CD4-positive, alpha-beta T cell (primary cell): ENCODE measurements at regions of chr1 and their contacts with region 1.

Region 1: GRCh38 chr1:92980732-92981647 is 19.7 kb upstream of the DIPK1A start:
- DNase-seq: peak in 12 of 14 experiments; percentile 26 to 92 (median 45)
- ATAC-seq: peak; percentile 93
- H3K4me3 ChIP-seq: no peak overlapping the region
- H3K4me3 Mint-ChIP-seq: peak overlapping the region; percentile 67
- H3K27ac ChIP-seq: peak overlapping the region; percentile 85 to 89
- H3K27ac Mint-ChIP-seq: peak overlapping the region; percentile 97
- H3K4me1 ChIP-seq: peaks cover 41% of the 10 kb centered on the region
- H3K4me1 Mint-ChIP-seq: peaks cover 41% of the 10 kb centered on the region
- H3K27me3 ChIP-seq: no peaks in the 10 kb centered on the region
- H3K27me3 Mint-ChIP-seq: no peaks in the 10 kb centered on the region
- CTCF ChIP-seq: no peak

Region 2: GRCh38 chr1:92968138-92969032 is 12.6 kb before region 1 on chr1:
- CTCF ChIA-PET with region 1: interaction called, 15 read pairs
- POLR2A ChIA-PET with region 1: interaction called, 159 read pairs
- intact Hi-C with region 1: no loop called
- DNase-seq: peak in 4 of 14 experiments; percentile 35 to 75 (median 72)
- ATAC-seq: peak; percentile 47
- H3K4me3 ChIP-seq: no peak overlapping the region
- H3K4me3 Mint-ChIP-seq: no peak overlapping the region
- H3K27ac ChIP-seq: no peak overlapping the region
- H3K27ac Mint-ChIP-seq: peak overlapping the region; percentile 5
- H3K4me1 ChIP-seq: peaks cover 47% of the 10 kb centered on the region
- H3K4me1 Mint-ChIP-seq: peaks cover 30% of the 10 kb centered on the region
- H3K27me3 ChIP-seq: no peaks in the 10 kb centered on the region
- H3K27me3 Mint-ChIP-seq: no peaks in the 10 kb centered on the region
- CTCF ChIP-seq: peak; percentile 79

Region 3: GRCh38 chr1:93779540-93780192 is 798.7 kb after region 1 on chr1:
- CTCF ChIA-PET with region 1: no interaction called
- POLR2A ChIA-PET with region 1: no interaction called
- intact Hi-C with region 1: no loop called
- DNase-seq: no peak
- ATAC-seq: no peak
- H3K4me3 ChIP-seq: no peak overlapping the region
- H3K4me3 Mint-ChIP-seq: no peak overlapping the region
- H3K27ac ChIP-seq: no peak overlapping the region
- H3K27ac Mint-ChIP-seq: no peak overlapping the region
- H3K4me1 ChIP-seq: no peaks in the 10 kb centered on the region
- H3K4me1 Mint-ChIP-seq: no peaks in the 10 kb centered on the region
- H3K27me3 ChIP-seq: no peaks in the 10 kb centered on the region
- H3K27me3 Mint-ChIP-seq: no peaks in the 10 kb centered on the region
- CTCF ChIP-seq: no peak